Motor neuron (in vitro differentiated cells): ENCODE measurements at regions of chr12 and their contacts with region 1.

Region 1: DNA sequence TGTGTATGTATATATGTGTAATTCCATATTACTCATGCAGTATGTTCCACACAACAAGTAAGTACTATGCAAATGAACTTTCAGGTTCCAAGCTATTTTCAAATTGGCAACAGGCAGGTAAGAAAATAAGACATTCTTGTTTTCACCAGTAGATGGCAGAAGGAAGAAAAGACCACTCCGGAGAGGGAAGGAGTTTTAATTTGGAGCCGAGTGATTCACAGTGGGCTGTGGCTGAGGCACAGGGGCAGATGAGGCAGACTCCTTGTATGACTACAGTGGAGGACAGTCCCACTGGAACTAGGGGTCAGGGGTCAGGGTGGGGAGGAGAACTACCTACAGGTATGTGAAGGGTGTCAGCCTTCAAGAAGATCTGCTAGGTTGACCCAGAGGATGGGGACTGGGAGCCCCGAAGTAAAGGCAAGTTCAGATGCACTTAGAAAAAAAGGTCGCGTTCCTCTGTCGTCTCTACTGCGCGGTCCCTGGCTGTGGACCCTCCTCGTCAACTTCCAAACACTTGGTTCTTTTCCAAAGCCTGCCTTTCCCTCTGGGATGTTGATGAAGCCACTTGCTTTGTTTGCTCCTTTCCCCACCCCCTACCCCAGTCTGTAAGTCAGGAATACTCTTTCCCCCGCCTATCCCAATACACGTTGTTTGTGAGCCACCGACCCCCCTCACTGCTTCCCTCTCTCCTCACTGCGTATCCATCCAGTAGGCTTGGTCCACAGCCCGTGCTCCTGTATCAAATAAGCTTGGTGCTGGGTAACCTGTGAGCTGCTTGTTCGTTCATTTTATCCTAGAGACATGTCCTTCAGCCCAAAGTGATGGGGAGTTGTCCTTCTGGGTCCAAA is 24.1 kb downstream of the DDX47 start:
- ATAC-seq: peak; percentile 38 to 84 (median 64)
- H3K4me3 ChIP-seq: no peak overlapping the region
- H3K27ac ChIP-seq: no peak overlapping the region
- H3K4me1 ChIP-seq: no peaks in the 10 kb centered on the region

Region 2: DNA sequence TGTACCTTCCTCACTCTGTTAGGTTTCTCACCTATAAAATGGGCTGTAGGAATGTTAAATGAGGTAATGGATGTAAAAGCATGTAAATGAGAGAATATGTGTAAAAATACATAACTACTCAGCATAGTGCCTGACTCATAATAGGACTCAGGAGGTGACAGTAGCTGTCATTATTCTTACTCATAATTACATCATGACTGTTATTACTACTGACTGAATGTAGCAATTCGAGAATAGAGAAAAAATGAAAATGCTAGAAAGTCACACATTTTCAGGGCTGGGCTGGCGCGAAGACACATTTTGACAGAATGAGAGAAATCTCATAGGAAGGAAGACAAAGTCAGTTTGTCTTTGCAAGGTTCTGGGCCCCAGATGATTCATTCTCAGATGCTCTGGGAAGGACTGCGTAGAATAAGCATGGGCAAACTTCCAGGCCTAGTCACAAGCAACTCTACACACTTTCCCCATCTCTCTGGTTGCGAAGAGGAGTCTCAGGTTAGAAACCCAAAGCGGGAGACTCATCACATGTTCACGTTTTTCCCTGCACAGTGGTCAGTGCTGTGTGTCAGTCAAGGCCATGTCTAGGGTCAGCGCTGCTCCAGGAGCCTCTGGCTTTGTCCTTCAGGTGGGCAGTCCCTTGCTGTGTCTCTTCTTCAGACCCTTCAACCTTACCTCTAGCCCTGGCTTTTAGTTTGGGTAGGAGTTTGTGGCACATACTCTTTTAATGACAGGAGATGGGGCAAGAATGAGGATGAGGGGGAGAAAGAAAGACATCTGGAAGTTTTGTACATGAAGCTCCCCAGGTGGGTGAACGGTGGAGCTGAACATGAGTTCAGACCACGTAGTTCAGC is 62.5 kb after region 1 on chr12:
- in situ Hi-C with region 1: loop called in 1 of 9 experiments (anchors 10 kb)
- ATAC-seq: peak; percentile 34 to 85 (median 67)
- H3K4me3 ChIP-seq: no peak overlapping the region
- H3K27ac ChIP-seq: peak overlapping the region in 1 of 2 donors; percentile 43
- H3K4me1 ChIP-seq: peaks cover 0 to 5% of the 10 kb centered on the region in 2 donors

Region 3: DNA sequence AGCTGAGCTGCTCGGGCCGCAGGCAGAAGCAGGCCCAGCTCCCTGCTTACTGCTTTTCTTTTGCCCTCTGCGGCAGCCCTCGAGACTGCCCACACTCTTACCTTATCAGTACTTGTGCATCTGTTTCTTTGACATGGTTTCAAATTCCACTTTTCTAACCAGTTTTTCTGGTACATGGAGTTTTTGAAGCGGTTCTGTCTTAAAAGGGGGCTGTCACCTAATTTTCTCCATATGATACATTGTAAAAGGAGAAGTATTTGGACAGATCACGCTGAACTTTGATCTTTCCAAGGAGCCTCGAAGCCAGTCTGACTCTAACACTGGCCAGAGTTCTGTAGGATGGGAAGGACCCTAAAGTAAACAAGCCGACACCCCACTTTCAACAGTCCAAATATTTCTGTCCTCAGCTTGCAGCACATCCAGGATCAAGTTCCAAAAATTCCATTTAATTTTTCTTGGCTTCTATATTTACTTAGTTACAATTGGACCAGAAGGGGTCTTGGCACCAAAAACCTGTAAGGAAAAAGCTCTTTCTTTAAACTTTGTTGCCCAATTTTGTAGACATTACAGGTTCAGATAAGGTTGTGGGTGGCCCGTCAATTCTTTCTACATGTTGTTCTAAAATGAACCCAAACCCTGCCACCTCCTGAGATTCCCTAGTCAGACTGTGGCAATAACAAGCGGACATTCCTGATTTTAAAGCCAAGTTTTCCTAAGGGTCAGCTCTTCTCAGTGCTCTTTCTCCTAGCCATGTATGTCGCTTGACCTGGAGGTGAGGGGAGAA is 311.0 kb after region 1 on chr12:
- in situ Hi-C with region 1: no loop called
- ATAC-seq: no peak
- H3K4me3 ChIP-seq: no peak overlapping the region
- H3K27ac ChIP-seq: no peak overlapping the region
- H3K4me1 ChIP-seq: peaks cover 0 to 1% of the 10 kb centered on the region in 2 donors